Testis (tissue), 5 donors: ENCODE measurements at regions of chr19 and their contacts with region 1.

Region 1: GRCh38 chr19:4851551-4852290 is 15.7 kb downstream of the PLIN3 start:
- DNase-seq: peak; percentile 65
- H3K4me3 ChIP-seq: no peak overlapping the region
- H3K27ac ChIP-seq: no peak overlapping the region
- H3K4me1 ChIP-seq: peaks cover 15% of the 10 kb centered on the region
- H3K27me3 ChIP-seq: no peaks in the 10 kb centered on the region
- CTCF ChIP-seq: peak; percentile 51 to 79 (median 68)
- POLR2A ChIP-seq: no peak

Region 2: DNA sequence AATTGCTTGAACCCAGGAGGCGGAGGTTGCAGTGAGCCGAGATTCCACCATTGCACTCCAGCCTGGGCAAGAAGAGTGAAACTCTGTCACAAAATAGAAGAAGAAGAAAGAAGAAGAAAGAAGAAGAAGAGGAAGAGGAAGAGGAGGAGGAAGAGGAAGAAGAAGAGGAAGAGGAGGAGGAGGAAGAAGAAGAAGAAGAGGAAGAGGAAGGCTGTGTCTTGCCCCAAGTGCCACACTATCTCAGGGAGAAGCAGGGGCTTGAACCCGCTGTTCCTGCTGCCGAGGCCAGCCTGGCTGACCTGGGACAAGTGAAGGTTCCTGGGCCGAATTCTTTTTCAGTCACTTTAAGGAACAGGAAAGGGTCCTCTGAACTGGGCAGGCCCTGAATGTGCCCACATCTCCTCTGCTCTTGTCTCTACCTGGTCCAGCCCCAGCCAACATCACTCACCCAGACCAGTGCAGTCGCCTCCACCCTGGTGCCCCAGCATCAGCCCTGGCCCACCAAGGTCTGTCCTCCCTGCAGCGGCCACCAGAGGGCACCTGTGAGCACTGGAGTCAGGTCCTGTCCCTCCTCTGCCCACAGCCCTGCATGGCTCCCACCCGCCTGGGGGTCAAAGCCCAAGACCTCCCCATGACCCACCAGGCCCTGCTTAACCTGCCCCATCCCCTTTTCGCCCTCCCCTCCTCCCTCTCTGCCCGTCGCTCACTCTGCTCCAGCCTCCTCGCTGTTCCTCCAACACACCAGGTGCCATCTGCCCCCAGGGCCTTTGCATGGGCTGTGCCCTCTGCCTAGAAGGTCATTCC is 40.2 kb before region 1 on chr19:
- intact Hi-C with region 1: loop called (anchors 5 kb)
- DNase-seq: peak; percentile 89
- H3K4me3 ChIP-seq: no peak overlapping the region
- H3K27ac ChIP-seq: no peak overlapping the region
- H3K4me1 ChIP-seq: no peaks in the 10 kb centered on the region
- H3K27me3 ChIP-seq: no peaks in the 10 kb centered on the region
- CTCF ChIP-seq: peak; percentile 68 to 90 (median 78)
- POLR2A ChIP-seq: no peak

Region 3: DNA sequence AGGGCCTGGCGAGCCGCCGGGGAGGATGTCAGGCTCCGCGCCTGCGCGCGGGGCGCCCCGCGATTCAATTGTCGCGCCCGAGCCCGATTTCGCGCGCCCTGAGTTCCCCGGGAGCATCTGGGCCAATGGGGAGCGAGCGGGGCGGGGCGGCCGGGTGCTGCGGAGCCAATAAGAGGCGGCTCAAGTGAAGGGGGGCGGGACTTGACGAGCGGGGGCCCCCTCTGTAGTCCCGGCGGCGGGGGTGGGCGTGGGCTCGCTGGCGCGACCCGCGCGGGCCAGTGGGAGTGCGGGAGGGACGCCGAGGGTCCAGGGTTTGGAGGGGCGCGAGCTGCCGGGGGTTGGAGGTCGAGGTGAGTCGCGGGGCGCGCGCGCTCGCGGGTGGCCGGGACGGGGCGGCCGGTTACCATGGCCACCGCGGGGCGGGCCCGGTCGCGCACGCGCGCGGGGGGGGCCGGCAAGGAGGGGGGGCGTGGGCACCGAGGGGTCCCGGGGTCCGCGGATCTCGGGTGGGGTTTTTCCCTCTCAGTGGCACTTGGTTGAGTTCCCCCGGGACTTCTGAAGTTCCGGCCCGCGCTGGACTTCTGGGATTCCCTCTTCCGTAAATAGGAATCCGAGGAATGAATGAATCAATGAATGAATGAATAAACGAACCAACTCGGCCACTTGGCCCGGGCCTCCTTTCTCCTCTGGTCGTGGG is 58.3 kb after region 1 on chr19:
- intact Hi-C with region 1: no loop called
- DNase-seq: peak; percentile 97
- H3K4me3 ChIP-seq: peak overlapping the region; percentile 69 to 71
- H3K27ac ChIP-seq: no peak overlapping the region
- H3K4me1 ChIP-seq: peaks cover 13% of the 10 kb centered on the region
- H3K27me3 ChIP-seq: no peaks in the 10 kb centered on the region
- CTCF ChIP-seq: no peak
- POLR2A ChIP-seq: no peak